ENCODE measurements at regions of chr6 and their contacts with region 1.

Region 1: GRCh38 chr6:131694831-131695426 is 6.3 kb downstream of the OR2A4 start:
- DNase-seq: peak; percentile 59 to 70
- H3K4me3 ChIP-seq: no peak overlapping the region
- H3K4me1 ChIP-seq: no peaks in the 10 kb centered on the region
- H3K27me3 ChIP-seq: no peaks in the 10 kb centered on the region

Region 2: GRCh38 chr6:131914967-131915751 is 220.2 kb after region 1 on chr6:
- in situ Hi-C with region 1: loop called (anchors 5 kb)
- DNase-seq: peak; percentile 75 to 77
- H3K4me3 ChIP-seq: no peak overlapping the region
- H3K4me1 ChIP-seq: no peaks in the 10 kb centered on the region; the same call in 1 of the 2 replicates
- H3K27me3 ChIP-seq: peaks cover 16% of the 10 kb centered on the region

Region 3: GRCh38 chr6:132161283-132161682 is 466.4 kb after region 1 on chr6:
- in situ Hi-C with region 1: loop called (anchors 25 kb)
- DNase-seq: peak in 1 of 2 experiments; percentile 9
- H3K4me3 ChIP-seq: no peak overlapping the region
- H3K4me1 ChIP-seq: no peaks in the 10 kb centered on the region
- H3K27me3 ChIP-seq: no peaks in the 10 kb centered on the region

Region 4: GRCh38 chr6:132179955-132180354 is 485.0 kb after region 1 on chr6:
- in situ Hi-C with region 1: no loop called
- DNase-seq: no peak
- H3K4me3 ChIP-seq: no peak overlapping the region
- H3K4me1 ChIP-seq: no peaks in the 10 kb centered on the region
- H3K27me3 ChIP-seq: no peaks in the 10 kb centered on the region

Region 5: GRCh38 chr6:132259070-132259469 is 564.1 kb after region 1 on chr6:
- in situ Hi-C with region 1: loop called (anchors 25 kb)
- DNase-seq: peak; percentile 12 to 54
- H3K4me3 ChIP-seq: no peak overlapping the region
- H3K4me1 ChIP-seq: no peaks in the 10 kb centered on the region
- H3K27me3 ChIP-seq: no peaks in the 10 kb centered on the region

Measured in HAP-1 (cell line).